ENCODE measurements at regions of chr15 and their contacts with region 1.

Region 1: GRCh38 chr15:90143166-90143655 is 40.9 kb upstream of the IDH2 start:
- DNase-seq: peak; percentile 50
- ATAC-seq: peak; percentile 99
- H3K4me3 ChIP-seq: 0 out of 4 replicates have a peak overlapping the region, but pooled peaks of 1 of the 2 experiments have one; percentile 10
- H3K27ac ChIP-seq: peak overlapping the region; percentile 83
- H3K4me1 ChIP-seq: peaks cover 17% of the 10 kb centered on the region
- H3K27me3 ChIP-seq: no peaks in the 10 kb centered on the region
- CTCF ChIP-seq: peak; percentile 97

Region 2: DNA sequence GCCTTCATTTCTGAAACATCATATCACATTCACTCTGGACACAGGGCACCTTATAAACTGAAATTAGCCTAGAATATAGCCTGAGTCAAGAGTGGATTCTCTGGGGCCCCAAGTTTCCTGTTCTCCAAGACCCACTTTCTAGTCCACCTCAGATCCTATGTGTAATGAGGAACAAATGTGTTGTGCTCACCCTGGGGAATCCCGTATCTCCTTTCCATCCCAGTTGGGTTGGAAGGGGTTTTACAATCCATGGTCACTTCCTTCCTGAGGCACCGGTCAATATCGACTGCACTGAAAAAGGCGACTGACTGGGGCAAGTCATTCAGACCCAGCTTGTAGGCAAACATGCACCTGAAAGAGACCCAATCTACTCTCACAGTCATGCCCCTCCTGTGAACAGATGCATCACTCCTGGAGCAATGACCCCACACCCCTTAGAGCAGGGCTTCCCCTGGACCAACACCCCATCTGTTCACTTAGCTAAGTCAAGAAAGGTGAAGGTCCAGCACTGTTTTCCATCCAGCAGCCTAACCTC is 826.0 kb before region 1 on chr15:
- CTCF ChIA-PET with region 1: no interaction called
- POLR2A ChIA-PET with region 1: no interaction called
- in situ Hi-C with region 1: no loop called
- intact Hi-C with region 1: no loop called
- DNase-seq: no peak
- ATAC-seq: no peak
- H3K4me3 ChIP-seq: no peak overlapping the region
- H3K27ac ChIP-seq: no peak overlapping the region
- H3K4me1 ChIP-seq: no peaks in the 10 kb centered on the region
- H3K27me3 ChIP-seq: no peaks in the 10 kb centered on the region
- CTCF ChIP-seq: no peak

Region 3: GRCh38 chr15:89937364-89938350 is 205.6 kb before region 1 on chr15:
- CTCF ChIA-PET with region 1: no interaction called
- POLR2A ChIA-PET with region 1: no interaction called
- in situ Hi-C with region 1: no loop called
- intact Hi-C with region 1: no loop called
- DNase-seq: no peak
- ATAC-seq: no peak
- H3K4me3 ChIP-seq: no peak overlapping the region
- H3K27ac ChIP-seq: no peak overlapping the region
- H3K4me1 ChIP-seq: no peaks in the 10 kb centered on the region
- H3K27me3 ChIP-seq: no peaks in the 10 kb centered on the region
- CTCF ChIP-seq: no peak

Region 4: DNA sequence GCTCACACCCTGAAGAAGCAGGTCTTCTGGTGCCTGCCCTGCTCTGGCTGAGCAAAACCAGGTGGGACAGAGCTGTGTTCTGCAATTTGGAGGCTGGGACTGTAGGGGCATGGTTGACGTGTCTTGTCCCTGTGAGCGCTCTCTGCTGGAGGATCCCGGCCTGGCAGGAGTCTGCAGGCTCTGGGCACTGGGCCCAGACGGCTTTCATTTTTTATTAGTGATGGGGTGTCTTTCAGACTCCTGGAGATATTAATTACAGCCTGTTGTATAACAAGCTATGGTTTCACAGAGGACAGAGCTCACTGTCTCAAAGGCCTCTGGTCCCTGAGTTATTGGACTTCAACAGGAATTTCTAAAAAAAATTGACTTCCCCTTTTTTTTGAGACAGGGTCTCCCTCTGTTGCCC is 171.6 kb before region 1 on chr15:
- CTCF ChIA-PET with region 1: no interaction called
- POLR2A ChIA-PET with region 1: no interaction called
- in situ Hi-C with region 1: no loop called
- intact Hi-C with region 1: no loop called
- DNase-seq: peak; percentile 30
- ATAC-seq: peak; percentile 98
- H3K4me3 ChIP-seq: no peak overlapping the region
- H3K27ac ChIP-seq: no peak overlapping the region
- H3K4me1 ChIP-seq: no peaks in the 10 kb centered on the region
- H3K27me3 ChIP-seq: no peaks in the 10 kb centered on the region
- CTCF ChIP-seq: peak; percentile 77

Region 5: GRCh38 chr15:90249203-90249863 is 106.1 kb after region 1 on chr15 and contains the start of gene TTLL13:
- CTCF ChIA-PET with region 1: interaction called, 6 read pairs
- POLR2A ChIA-PET with region 1: interaction called, 13 read pairs
- in situ Hi-C with region 1: no loop called
- intact Hi-C with region 1: no loop called
- DNase-seq: no peak
- ATAC-seq: peak; percentile 96
- H3K4me3 ChIP-seq: peak within 1 kb of the TSS; percentile 59 to 83
- H3K27ac ChIP-seq: peak within 1 kb of the TSS; percentile 68
- H3K4me1 ChIP-seq: peaks cover 10% of the 10 kb centered on the region
- H3K27me3 ChIP-seq: no peaks in the 10 kb centered on the region
- CTCF ChIP-seq: no peak
- total RNA-seq, gene TTLL13: 0.39 TPM

Region 6: GRCh38 chr15:90286678-90287077 is 143.5 kb after region 1 on chr15:
- CTCF ChIA-PET with region 1: interaction called, 9 read pairs
- POLR2A ChIA-PET with region 1: no interaction called
- in situ Hi-C with region 1: no loop called
- intact Hi-C with region 1: loop called (anchors 2 kb)
- DNase-seq: no peak
- ATAC-seq: peak; percentile 91
- H3K4me3 ChIP-seq: no peak overlapping the region
- H3K27ac ChIP-seq: no peak overlapping the region
- H3K4me1 ChIP-seq: 0 out of 2 replicates have a peak, but pooled peaks cover 3% of the 10 kb centered on the region
- H3K27me3 ChIP-seq: no peaks in the 10 kb centered on the region
- CTCF ChIP-seq: no peak; the same call in 1 of the 2 replicates